ENCODE measurements at regions of chr6 and their contacts with region 1.

Region 1: GRCh38 chr6:8435160-8435852 is at the start of gene SLC35B3:
- DNase-seq: peak; percentile 95 to 98 (median 97)
- H3K4me3 ChIP-seq: peak within 1 kb of the TSS; percentile 95 to 99
- H3K4me3 Mint-ChIP-seq: peak within 1 kb of the TSS; percentile 92 to 96 (median 94)
- H3K27ac ChIP-seq: peak within 1 kb of the TSS; percentile 94
- H3K27ac Mint-ChIP-seq: peak within 1 kb of the TSS; percentile 96 to 98 (median 98)
- H3K4me1 ChIP-seq: peaks cover 27% of the 10 kb centered on the region
- H3K4me1 Mint-ChIP-seq: peaks cover 28 to 51% (median 37%) of the 10 kb centered on the region in 4 donors
- H3K27me3 ChIP-seq: no peaks in the 10 kb centered on the region
- H3K27me3 Mint-ChIP-seq: no peaks in the 10 kb centered on the region
- total RNA-seq, gene SLC35B3: 17.2 to 18.5 TPM

Region 2: DNA sequence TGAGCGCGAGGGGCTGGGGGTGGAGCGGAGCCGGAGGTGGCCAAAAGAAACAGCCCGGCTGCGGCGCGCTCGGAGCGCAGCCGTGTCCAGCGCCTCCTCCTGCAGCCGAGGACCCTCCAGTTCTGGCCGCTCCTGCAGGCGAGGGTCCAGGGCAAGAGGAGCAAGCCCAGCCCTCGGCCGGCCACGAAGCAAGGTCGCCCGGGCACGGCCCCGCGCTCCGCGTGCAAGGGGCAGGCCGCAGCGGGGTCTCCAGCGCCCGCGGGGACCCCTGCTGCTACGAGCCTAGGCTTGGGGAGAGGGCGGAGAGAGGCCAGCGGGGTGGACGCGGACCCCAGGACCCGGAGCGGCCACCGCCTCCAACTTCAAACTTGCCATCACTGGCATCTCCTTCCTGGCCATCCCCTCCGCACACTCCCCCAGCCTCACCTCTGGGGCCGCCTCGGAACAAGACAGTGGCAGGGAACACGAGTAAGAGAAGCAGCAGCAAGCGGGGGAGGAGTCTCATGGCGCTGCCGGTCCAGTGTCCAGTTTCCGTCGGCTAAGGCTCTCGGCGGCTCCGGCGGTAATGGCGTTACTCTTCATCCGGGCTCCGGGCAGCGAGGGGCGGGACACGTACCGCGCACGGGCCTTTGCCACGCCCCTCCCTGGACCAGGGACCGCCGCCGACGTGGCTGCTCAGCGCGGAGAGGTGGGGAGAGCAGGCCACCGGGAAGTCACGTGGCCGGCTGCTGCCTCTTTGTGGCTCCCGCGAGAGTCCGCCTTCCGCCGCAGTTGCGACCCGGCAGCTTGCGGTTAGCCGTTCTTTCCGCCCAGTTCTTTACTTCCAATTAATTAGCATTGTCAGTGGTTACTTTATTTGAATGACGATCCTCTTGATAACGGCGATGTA is 1122.4 kb before region 1 on chr6 and contains the start of gene SSR1:
- CTCF ChIA-PET with region 1: no interaction called
- POLR2A ChIA-PET with region 1: no interaction called
- intact Hi-C with region 1: loop called (anchors 10 kb)
- DNase-seq: peak; percentile 89 to 93 (median 91)
- H3K4me3 ChIP-seq: peak within 1 kb of the TSS; percentile 95 to 97
- H3K4me3 Mint-ChIP-seq: peak within 1 kb of the TSS; percentile 91 to 100 (median 96)
- H3K27ac ChIP-seq: peak within 1 kb of the TSS; percentile 77
- H3K27ac Mint-ChIP-seq: peak within 1 kb of the TSS; percentile 83 to 98 (median 95)
- H3K4me1 ChIP-seq: peaks cover 53% of the 10 kb centered on the region
- H3K4me1 Mint-ChIP-seq: peaks cover 33 to 62% (median 47%) of the 10 kb centered on the region in 4 donors
- H3K27me3 ChIP-seq: no peaks in the 10 kb centered on the region
- H3K27me3 Mint-ChIP-seq: no peaks in the 10 kb centered on the region
- total RNA-seq, gene SSR1: 150 to 158 TPM

Region 3: DNA sequence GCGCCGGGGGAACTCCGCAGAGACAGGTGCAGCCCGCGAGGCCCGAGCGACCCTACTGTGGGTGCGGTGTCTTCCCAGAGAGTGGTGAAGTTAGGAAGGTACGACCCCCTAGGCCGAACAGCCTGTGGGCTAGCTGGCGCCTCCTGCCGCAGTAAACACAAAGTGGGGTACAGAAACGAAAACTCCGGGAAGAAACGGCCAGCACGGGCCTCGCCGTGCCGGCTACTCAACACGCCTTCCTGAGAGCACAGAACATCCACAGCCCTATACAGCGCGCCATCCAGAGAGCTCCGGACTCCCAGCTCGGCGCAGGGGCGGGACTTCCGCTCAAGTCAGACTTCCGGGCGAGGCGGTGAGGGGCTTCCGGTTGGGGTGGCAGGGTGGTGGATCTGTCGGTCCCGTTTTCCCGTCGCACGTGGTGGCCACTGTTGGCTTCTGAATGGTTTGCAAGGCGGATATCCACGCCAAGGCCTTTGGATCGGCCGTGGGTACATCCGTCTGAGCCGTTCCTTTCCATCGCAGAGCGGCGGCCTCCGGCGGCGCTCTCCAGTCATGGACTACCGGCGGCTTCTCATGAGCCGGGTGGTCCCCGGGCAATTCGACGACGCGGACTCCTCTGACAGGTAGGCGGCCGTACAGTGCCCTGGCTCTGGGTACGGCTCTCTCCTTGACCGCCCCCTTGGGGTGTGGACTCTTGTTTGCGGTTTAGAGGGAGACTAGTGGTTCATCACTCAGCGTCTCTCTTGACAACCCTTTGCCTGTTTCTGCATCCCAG is 1045.7 kb before region 1 on chr6 and contains the starts of genes CAGE1 and RIOK1:
- CTCF ChIA-PET with region 1: no interaction called
- POLR2A ChIA-PET with region 1: no interaction called
- intact Hi-C with region 1: loop called (anchors 10 kb)
- DNase-seq: peak; percentile 94 to 96 (median 96)
- H3K4me3 ChIP-seq: peak within 1 kb of the TSS; percentile 91 to 99
- H3K4me3 Mint-ChIP-seq: peak within 1 kb of the TSS; percentile 92 to 97 (median 94)
- H3K27ac ChIP-seq: peak within 1 kb of the TSS; percentile 94
- H3K27ac Mint-ChIP-seq: peak within 1 kb of the TSS; percentile 97 to 100 (median 100)
- H3K4me1 ChIP-seq: peaks cover 30% of the 10 kb centered on the region
- H3K4me1 Mint-ChIP-seq: peaks cover 32 to 51% (median 42%) of the 10 kb centered on the region in 4 donors
- H3K27me3 ChIP-seq: no peaks in the 10 kb centered on the region
- H3K27me3 Mint-ChIP-seq: no peaks in the 10 kb centered on the region
- total RNA-seq, gene CAGE1: 0.17 to 0.33 TPM
- total RNA-seq, gene RIOK1: 22.4 to 26.1 TPM

Region 4: GRCh38 chr6:8102122-8102958 is 333.0 kb before region 1 on chr6 and contains the start of gene EEF1E1:
- CTCF ChIA-PET with region 1: no interaction called
- POLR2A ChIA-PET with region 1: no interaction called
- intact Hi-C with region 1: loop called (anchors 1 kb)
- DNase-seq: peak; percentile 92 to 98 (median 94)
- H3K4me3 ChIP-seq: peak within 1 kb of the TSS; percentile 87 to 95
- H3K4me3 Mint-ChIP-seq: peak within 1 kb of the TSS; percentile 92 to 100 (median 97)
- H3K27ac ChIP-seq: peak within 1 kb of the TSS; percentile 79
- H3K27ac Mint-ChIP-seq: peak within 1 kb of the TSS; percentile 86 to 98 (median 96)
- H3K4me1 ChIP-seq: peaks cover 19% of the 10 kb centered on the region
- H3K4me1 Mint-ChIP-seq: peaks cover 17 to 30% (median 23%) of the 10 kb centered on the region in 4 donors
- H3K27me3 ChIP-seq: no peaks in the 10 kb centered on the region
- H3K27me3 Mint-ChIP-seq: peaks cover 6 to 9% of the 10 kb centered on the region in 2 donors
- total RNA-seq, gene EEF1E1: 14.8 to 20.7 TPM

Region 5: DNA sequence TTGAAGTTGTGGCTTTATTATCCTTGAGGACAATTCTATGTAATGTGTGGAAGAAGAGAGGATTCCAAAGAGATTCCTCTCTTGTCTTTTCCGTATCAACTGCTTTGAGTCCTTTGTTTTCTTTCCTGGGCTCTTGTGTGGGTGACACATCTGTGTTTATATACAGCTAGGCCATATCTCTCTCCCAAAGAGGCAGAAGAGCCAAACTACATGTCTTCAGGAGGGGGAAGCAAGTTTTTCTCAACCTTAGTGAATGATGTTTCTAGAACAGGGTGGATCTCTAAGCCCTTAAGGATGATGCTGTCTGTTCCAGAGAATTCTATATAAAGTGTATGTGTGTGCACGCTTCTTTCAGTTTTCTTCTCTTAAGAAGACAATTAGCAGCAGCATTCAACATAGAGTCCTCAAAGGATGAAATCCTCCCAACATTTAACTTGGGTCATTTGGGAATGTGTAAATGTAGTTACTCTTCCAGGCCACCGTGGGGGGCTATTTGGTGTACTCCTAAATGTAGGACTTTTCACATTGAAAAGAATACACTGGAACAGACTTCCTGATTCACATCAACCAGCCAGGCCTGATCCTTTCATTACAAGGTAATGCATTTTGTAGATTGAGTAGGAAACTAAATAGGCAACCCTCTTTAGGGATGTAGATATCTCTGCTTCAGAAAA is 240.1 kb before region 1 on chr6:
- CTCF ChIA-PET with region 1: no interaction called
- POLR2A ChIA-PET with region 1: no interaction called
- intact Hi-C with region 1: no loop called
- DNase-seq: no peak
- H3K4me3 ChIP-seq: no peak overlapping the region
- H3K4me3 Mint-ChIP-seq: no peak overlapping the region
- H3K27ac ChIP-seq: no peak overlapping the region
- H3K27ac Mint-ChIP-seq: no peak overlapping the region
- H3K4me1 ChIP-seq: no peaks in the 10 kb centered on the region
- H3K4me1 Mint-ChIP-seq: no peaks in the 10 kb centered on the region
- H3K27me3 ChIP-seq: no peaks in the 10 kb centered on the region
- H3K27me3 Mint-ChIP-seq: peaks cover 8 to 10% of the 10 kb centered on the region in 2 donors

Region 6: DNA sequence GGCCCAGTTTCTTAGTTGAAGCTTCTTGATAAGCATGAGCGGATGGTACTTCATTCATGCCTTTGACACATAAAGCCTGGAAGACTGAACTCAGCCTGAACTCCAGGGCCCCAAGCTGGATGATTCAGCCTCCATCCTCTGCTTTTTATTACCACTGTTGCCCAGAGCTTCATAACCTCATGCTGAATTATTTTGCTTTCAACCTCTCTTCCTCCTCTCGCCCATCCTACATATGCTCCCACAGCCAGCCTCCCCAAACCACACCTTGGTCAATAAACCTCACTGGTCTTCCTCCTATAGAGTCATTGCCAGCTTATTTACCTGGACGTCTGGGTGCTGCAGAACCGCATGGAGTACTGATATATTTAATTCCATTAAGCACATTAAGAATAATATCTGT is 59.4 kb before region 1 on chr6:
- CTCF ChIA-PET with region 1: no interaction called
- POLR2A ChIA-PET with region 1: no interaction called
- intact Hi-C with region 1: no loop called
- DNase-seq: no peak
- H3K4me3 ChIP-seq: no peak overlapping the region
- H3K4me3 Mint-ChIP-seq: no peak overlapping the region
- H3K27ac ChIP-seq: no peak overlapping the region
- H3K27ac Mint-ChIP-seq: no peak overlapping the region
- H3K4me1 ChIP-seq: no peaks in the 10 kb centered on the region
- H3K4me1 Mint-ChIP-seq: no peaks in the 10 kb centered on the region
- H3K27me3 ChIP-seq: no peaks in the 10 kb centered on the region
- H3K27me3 Mint-ChIP-seq: peaks cover 11 to 17% of the 10 kb centered on the region in 2 donors

Region 7: DNA sequence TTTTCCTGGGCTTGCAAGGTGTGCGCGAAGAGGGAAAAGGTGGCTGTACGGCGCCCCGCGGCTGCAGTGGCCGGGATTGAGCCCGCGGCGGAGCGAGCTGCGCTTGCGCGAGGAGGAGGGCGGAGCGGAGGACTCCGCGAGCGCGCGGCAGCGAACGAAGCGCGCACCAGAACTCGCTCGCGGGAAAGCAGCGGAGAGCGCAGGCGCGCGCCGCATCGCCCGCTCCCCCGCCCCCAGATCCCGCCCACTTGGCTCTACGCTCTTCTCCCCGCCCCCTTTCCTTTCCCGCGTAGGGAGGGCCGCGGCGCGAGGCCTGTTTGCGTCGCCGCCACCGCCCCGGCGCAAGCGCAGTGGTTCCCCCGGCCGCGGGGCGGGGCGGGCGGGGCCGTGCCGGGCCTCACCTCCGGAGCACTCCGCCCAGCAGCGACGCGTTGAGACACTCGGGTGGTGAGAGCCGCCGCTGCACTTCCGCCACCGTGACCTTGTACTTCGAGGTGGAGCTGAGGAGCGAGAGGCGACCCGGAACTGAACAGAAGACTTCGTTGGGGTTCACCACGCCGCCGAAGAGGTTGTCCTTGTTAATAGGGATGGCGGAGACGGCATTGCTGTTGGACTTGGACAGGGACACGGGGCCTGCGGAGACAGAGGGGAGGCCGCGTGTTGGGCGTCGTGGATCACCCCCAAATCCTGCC is 1968.9 kb after region 1 on chr6:
- CTCF ChIA-PET with region 1: no interaction called
- POLR2A ChIA-PET with region 1: no interaction called
- intact Hi-C with region 1: loop called (anchors 5 kb)
- DNase-seq: peak; percentile 85 to 90 (median 87)
- H3K4me3 ChIP-seq: peak overlapping the region; percentile 51 to 64
- H3K4me3 Mint-ChIP-seq: peak overlapping the region; percentile 75 to 86 (median 84)
- H3K27ac ChIP-seq: peak overlapping the region; percentile 25
- H3K27ac Mint-ChIP-seq: peak overlapping the region; percentile 55 to 89 (median 76)
- H3K4me1 ChIP-seq: peaks cover 17% of the 10 kb centered on the region
- H3K4me1 Mint-ChIP-seq: peaks cover 9 to 19% (median 13%) of the 10 kb centered on the region in 4 donors
- H3K27me3 ChIP-seq: peaks cover 10% of the 10 kb centered on the region
- H3K27me3 Mint-ChIP-seq: peaks cover 28 to 31% of the 10 kb centered on the region in 2 donors

Measured in CD4-positive, alpha-beta memory T cell (primary cell).